ENCODE measurements at regions of chr12 and their contacts with region 1.

Region 1: GRCh38 chr12:27859648-27860047 is 79.6 kb upstream of the MANSC4 start:
- DNase-seq: no peak
- ATAC-seq: no peak
- H3K4me3 ChIP-seq: no peak overlapping the region
- H3K27ac ChIP-seq: no peak overlapping the region
- H3K4me1 ChIP-seq: no peaks in the 10 kb centered on the region
- H3K27me3 ChIP-seq: peaks cover 0 to 6% of the 10 kb centered on the region in 2 experiments; a peak in 1 of 5 replicates
- CTCF ChIP-seq: no peak
- EP300 ChIP-seq: no peak
- POLR2A ChIP-seq: no peak
- RAD21 ChIP-seq: no peak

Region 2: DNA sequence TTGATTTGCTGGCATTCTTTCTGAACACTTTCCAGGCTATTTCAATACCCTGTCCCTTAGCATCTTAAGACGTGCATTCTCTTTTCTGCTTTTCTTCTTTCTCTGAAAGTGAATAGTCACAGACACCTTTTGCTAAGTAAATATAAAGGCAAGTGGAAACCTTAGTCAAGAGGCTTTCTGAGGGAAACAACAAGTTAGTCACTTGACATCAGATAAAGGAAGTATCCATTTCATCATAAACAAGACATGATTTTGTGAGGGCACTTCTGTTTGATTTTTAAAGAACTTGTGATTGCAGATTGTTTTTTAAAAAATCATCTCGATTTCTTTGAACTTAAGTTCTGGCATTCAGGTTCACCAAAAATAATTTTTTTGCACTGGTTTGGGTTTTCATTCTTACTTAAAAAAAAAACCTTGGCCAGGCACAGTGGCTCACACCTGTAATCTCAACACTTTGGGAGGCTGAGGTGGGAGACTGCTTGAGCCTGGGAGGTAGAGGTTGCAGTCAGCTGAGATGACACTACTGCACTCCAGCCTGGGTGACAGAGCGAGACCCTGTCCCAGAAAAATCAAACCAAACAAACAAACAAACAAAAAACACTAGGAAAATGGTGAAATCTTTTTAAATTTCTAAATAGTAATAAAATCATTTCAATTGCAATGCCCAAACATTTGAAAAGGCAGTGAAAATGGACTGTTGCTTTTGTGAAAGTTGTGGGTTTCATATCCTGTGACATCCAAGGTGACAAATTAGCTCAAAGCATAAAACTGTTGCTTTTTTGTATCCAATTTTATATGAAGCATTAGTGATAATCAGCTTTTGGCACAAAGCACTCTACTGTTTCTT is 87.9 kb before region 1 on chr12:
- CTCF ChIA-PET with region 1: no interaction called
- POLR2A ChIA-PET with region 1: no interaction called
- in situ Hi-C with region 1: no loop called
- intact Hi-C with region 1: loop called (anchors 1 kb)
- DNase-seq: no peak
- ATAC-seq: no peak
- H3K4me3 ChIP-seq: no peak overlapping the region
- H3K27ac ChIP-seq: no peak overlapping the region
- H3K4me1 ChIP-seq: no peaks in the 10 kb centered on the region
- H3K27me3 ChIP-seq: no peaks in the 10 kb centered on the region; a peak in 1 of 5 replicates
- CTCF ChIP-seq: no peak
- EP300 ChIP-seq: no peak
- POLR2A ChIP-seq: no peak
- RAD21 ChIP-seq: no peak

Measured in HepG2 (cell line).